Activated CD4-positive, alpha-beta memory T cell treated with anti-CD3 and anti-CD28 coated beads for 36 hours (primary cell): ENCODE measurements at regions of chr6 and their contacts with region 1.

Region 1: DNA sequence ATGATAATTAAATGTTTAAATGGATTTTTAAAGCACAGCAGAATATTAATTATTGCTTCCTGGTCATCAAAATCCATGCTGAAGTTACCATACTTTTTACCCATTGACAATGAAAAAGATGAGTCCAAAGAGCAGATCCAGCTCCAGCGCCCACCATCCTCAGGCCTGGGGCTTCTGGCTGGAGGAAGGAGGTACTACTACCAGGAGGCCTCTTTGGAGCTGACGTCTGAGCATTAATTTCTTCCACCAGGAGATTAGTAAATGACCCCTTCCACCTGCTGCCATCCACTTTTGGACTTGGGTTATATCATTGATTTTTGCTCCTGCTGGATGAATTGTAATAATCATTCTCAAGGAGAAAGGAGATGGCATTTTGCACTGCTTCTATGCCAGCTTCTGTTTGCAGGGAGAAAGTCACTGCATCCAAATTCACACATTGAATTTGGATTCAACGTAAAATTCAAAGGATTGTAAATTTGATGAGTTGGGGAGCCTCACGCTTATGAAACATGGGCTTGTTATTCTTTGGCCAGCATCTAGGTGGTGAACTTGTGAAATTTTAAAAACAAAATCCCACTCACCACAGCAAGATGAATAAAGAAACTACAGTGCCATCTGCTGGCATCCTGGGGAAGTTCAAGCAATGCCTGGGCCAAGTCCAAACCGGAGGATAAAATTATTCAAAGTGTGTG is 121.8 kb downstream of the SASH1 start:
- DNase-seq: peak; percentile 67
- H3K4me3 Mint-ChIP-seq: no peak overlapping the region
- H3K27ac Mint-ChIP-seq: no peak overlapping the region
- H3K4me1 Mint-ChIP-seq: no peaks in the 10 kb centered on the region
- H3K27me3 Mint-ChIP-seq: peaks cover 10% of the 10 kb centered on the region

Region 2: DNA sequence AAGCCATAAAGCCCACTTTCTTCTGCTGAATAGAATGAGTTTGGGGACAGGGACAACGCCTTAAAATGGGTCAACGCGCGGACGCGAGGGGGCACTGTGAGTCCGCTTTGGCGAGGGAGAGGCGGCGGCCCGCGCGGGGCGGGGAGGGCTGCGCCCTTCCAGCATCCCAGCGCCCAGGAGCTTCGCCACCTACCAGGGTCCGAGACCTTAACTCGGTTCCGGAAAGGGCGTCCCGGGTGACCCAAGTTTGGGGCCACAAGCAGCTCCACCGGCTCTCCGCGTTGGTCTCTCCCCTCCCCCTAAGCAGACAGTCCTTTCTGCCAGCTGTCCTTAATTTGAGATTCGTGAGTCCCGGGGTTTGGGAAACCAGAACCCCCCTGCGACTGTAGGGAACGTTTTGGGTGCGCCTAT is 957.8 kb before region 1 on chr6:
- CTCF ChIA-PET with region 1: interaction called, 7 read pairs
- POLR2A ChIA-PET with region 1: no interaction called
- intact Hi-C with region 1: loop called (anchors 5 kb)
- DNase-seq: peak; percentile 71
- H3K4me3 Mint-ChIP-seq: no peak overlapping the region
- H3K27ac Mint-ChIP-seq: no peak overlapping the region
- H3K4me1 Mint-ChIP-seq: peaks cover 17% of the 10 kb centered on the region
- H3K27me3 Mint-ChIP-seq: peaks cover 55% of the 10 kb centered on the region

Region 3: DNA sequence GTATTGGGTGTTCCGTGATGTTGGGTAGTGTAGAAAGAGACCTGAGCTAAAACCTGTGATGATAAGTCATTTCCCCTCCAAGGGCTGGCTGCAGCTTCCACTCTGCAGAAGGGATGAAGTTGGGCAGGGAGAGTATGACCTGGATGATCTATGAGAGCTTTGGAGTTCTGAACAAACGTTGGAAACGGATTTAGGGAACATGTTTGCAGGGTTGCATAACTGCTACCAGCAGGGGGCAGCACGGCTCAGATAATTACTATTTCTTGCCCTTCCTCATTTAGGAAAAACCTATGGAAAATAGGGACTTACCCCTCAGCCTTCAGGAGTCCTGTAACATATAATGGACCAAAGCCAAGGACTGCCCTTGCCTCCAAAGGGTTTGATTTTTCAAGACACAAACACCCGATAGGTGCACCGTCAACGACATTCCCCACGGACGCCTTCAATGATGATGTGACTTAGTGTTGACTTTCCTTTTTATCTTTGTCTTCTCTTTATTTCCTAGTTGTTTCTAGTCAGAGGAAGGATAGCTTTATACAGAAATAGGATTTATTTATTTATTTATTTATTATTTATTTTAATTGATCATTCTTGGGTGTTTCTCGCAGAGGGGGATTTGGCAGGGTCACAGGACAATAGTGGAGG is 286.8 kb before region 1 on chr6:
- CTCF ChIA-PET with region 1: interaction called, 79 read pairs
- POLR2A ChIA-PET with region 1: no interaction called
- intact Hi-C with region 1: loop called (anchors 1 kb)
- DNase-seq: peak; percentile 35
- H3K4me3 Mint-ChIP-seq: no peak overlapping the region
- H3K27ac Mint-ChIP-seq: no peak overlapping the region
- H3K4me1 Mint-ChIP-seq: no peaks in the 10 kb centered on the region
- H3K27me3 Mint-ChIP-seq: peaks cover 17% of the 10 kb centered on the region

Region 4: GRCh38 chr6:148342357-148343046 is 122.0 kb before region 1 on chr6 and contains the start of gene SASH1:
- CTCF ChIA-PET with region 1: no interaction called
- POLR2A ChIA-PET with region 1: no interaction called
- intact Hi-C with region 1: loop called (anchors 10 kb)
- DNase-seq: peak; percentile 27
- H3K4me3 Mint-ChIP-seq: peak within 1 kb of the TSS; percentile 63
- H3K27ac Mint-ChIP-seq: no peak within 1 kb of the TSS
- H3K4me1 Mint-ChIP-seq: peaks cover 10% of the 10 kb centered on the region
- H3K27me3 Mint-ChIP-seq: peaks cover 40% of the 10 kb centered on the region
- total RNA-seq, gene SASH1: 0.44 to 1.2 TPM